Pancreas (tissue), 10 donors: ENCODE measurements at regions of chr7 and their contacts with region 1.

Region 1: DNA sequence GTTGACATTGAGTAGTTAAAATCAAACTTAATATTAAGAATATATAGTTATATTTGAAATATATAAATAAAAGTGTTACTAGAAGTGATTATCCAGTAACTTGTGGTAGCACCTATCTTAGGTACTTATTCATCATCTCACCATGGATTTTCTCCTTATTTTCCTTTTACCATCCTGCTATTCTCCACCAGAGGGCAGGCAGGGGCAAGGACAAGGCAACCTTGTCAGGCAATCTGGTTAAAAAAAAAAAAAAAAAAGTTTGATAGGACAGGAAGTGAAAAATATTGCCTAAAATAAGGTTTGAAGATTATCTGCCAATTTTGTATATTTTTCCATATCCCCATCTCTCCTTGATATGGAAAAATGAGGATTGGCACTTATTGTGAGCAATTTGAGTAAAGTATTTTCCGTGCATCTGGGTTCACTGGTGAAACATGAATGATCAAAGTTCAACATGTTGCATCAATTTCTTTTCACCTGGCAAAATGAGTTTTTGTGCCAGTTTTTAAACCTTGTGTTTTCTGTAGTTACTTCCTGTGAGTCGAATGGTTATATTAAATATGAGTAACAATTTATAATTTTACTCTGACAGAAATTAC is 256.7 kb downstream of the AGMO start:
- DNase-seq: peak in 3 of 6 donors; percentile 8 to 39 (median 37)
- ATAC-seq: peak in 3 of 4 donors; percentile 75 to 79 (median 78)
- H3K4me3 ChIP-seq: no peak overlapping the region
- H3K27ac ChIP-seq: no peak overlapping the region
- H3K4me1 ChIP-seq: no peaks in the 10 kb centered on the region
- H3K27me3 ChIP-seq: no peaks in the 10 kb centered on the region
- CTCF ChIP-seq: peak; percentile 29 to 64 (median 52)

Region 2: GRCh38 chr7:15113752-15114151 is 191.3 kb before region 1 on chr7:
- intact Hi-C with region 1: no loop called
- DNase-seq: no peak
- ATAC-seq: no peak
- H3K4me3 ChIP-seq: no peak overlapping the region
- H3K27ac ChIP-seq: no peak overlapping the region
- H3K4me1 ChIP-seq: no peaks in the 10 kb centered on the region
- H3K27me3 ChIP-seq: no peaks in the 10 kb centered on the region
- CTCF ChIP-seq: no peak

Region 3: DNA sequence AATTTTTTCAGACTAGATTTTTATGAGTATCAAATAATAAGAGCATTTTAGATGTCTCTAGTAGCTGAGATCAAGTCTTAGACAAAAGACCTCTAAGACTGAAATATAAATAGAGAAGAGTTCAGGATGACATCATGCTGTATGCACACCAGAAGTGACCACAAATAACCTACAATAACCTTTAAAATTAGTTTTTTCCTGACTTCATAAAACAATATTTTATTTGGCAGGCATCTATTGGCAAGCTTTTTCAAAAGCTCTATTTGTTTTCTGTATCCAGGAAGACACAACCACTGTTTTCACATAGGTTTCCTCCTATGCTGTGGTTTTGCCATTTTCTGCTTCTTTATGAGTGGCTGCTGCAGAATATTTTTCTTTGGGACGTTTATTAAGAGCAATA is 757.2 kb after region 1 on chr7:
- intact Hi-C with region 1: loop called in 1 of 3 experiments (anchors 10 kb)
- DNase-seq: no peak
- ATAC-seq: peak in 3 of 4 donors; percentile 29 to 71 (median 61)
- H3K4me3 ChIP-seq: no peak overlapping the region
- H3K27ac ChIP-seq: no peak overlapping the region
- H3K4me1 ChIP-seq: peaks cover 0 to 6% (median 4%) of the 10 kb centered on the region in 3 donors
- H3K27me3 ChIP-seq: no peaks in the 10 kb centered on the region
- CTCF ChIP-seq: no peak